Activated naive CD4-positive, alpha-beta T cell treated with anti-CD3 and anti-CD28 coated beads for 36 hours (primary cell): ENCODE measurements at regions of chr3 and their contacts with region 1.

Region 1: GRCh38 chr3:150763122-150763841 is at the start of gene SIAH2:
- DNase-seq: peak; percentile 94
- H3K4me3 Mint-ChIP-seq: peak within 1 kb of the TSS; percentile 99
- H3K27ac Mint-ChIP-seq: peak within 1 kb of the TSS; percentile 100
- H3K4me1 Mint-ChIP-seq: peaks cover 46% of the 10 kb centered on the region
- H3K27me3 Mint-ChIP-seq: no peaks in the 10 kb centered on the region
- total RNA-seq, gene SIAH2: 67.1 to 68.8 TPM

Region 2: DNA sequence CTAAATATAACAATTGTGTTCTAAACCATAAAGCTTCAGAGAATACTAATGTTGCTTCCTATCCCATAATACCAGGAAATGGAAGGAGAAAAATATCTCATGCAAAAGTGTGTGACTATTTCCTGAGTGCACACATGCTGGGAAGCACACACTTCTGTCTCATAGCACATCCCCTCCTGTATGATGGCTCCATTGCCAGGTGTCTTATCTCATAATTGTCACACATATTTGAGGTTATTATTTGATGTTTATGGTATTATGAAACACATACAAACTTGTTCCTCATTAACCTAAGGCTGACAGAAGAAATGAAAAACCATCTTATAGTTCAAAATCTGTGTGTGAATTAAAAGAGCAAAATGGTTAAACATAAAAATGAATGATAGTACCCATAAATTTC is 282.4 kb before region 1 on chr3:
- CTCF ChIA-PET with region 1: no interaction called
- intact Hi-C with region 1: no loop called
- DNase-seq: no peak
- H3K4me3 Mint-ChIP-seq: no peak overlapping the region
- H3K27ac Mint-ChIP-seq: no peak overlapping the region
- H3K4me1 Mint-ChIP-seq: no peaks in the 10 kb centered on the region
- H3K27me3 Mint-ChIP-seq: no peaks in the 10 kb centered on the region

Region 3: GRCh38 chr3:150603153-150603979 is 159.9 kb before region 1 on chr3 and contains the start of gene SELENOT:
- CTCF ChIA-PET with region 1: no interaction called
- intact Hi-C with region 1: loop called (anchors 1 kb)
- DNase-seq: peak; percentile 93
- H3K4me3 Mint-ChIP-seq: peak within 1 kb of the TSS; percentile 96
- H3K27ac Mint-ChIP-seq: peak within 1 kb of the TSS; percentile 97
- H3K4me1 Mint-ChIP-seq: peaks cover 59% of the 10 kb centered on the region
- H3K27me3 Mint-ChIP-seq: no peaks in the 10 kb centered on the region
- total RNA-seq, gene SELENOT: 68.4 to 71.2 TPM

Region 4: DNA sequence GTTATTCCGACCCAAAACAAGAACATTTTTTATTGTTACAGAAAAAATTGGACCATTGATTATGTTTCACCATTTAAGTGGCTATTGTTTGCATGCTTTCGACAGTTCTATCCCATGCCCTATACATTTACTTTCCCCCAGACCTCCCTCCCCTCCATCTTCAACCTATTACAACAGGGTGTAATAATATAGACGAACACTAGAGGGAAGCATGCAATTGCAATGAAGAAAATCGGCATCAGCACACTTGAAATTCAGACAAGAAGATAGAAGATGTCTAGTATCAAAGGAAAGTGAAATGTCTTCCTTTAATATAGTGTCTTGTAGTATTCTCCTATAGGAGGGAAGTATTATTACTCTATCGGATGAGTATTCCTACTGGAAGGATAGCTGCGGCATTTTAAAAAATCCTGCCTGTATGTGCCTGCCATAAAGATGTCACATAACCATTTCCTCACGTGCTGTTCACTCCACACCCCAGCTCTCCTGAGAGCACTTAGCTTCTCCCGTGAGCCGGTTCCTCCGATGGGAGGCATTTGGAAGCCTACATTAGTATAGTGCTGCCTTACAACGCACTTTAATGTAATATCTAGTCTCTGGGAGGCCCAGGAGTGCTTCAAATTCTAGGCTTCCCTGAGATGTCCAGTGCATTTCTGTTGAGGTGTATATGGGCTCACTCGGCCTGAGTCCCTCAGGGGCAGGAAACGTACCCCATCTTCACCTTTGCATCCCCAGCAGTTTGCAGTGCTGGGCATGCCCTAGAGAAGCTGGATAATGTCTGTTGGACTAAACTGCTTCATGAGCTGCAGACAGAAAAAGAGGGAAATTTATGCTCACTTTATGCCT is 41.8 kb before region 1 on chr3:
- CTCF ChIA-PET with region 1: interaction called, 38 read pairs
- intact Hi-C with region 1: loop called (anchors 1 kb)
- DNase-seq: no peak
- H3K4me3 Mint-ChIP-seq: no peak overlapping the region
- H3K27ac Mint-ChIP-seq: no peak overlapping the region
- H3K4me1 Mint-ChIP-seq: peaks cover 28% of the 10 kb centered on the region
- H3K27me3 Mint-ChIP-seq: no peaks in the 10 kb centered on the region

Region 5: DNA sequence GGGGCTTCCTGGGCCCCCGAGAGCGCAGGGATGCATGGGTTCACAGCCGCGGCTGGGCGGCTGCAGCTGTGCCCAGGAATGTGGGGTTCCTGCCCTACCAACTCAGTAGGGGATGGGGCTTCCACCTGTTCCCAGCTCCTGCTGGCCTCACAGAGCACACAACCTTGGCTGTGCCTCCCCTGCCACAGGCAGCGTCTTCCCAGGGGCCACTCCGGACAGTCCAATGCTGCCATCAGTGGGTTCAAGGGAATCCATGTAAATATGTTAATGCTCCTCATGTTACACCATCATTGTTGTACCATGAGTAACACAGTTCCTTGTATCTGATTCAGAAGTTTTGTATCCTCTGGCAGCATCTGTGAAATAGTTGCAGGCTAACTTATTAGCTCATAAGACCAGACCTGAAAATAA is 11.8 kb after region 1 on chr3:
- CTCF ChIA-PET with region 1: interaction called, 10 read pairs
- intact Hi-C with region 1: no loop called
- DNase-seq: no peak
- H3K4me3 Mint-ChIP-seq: no peak overlapping the region
- H3K27ac Mint-ChIP-seq: no peak overlapping the region
- H3K4me1 Mint-ChIP-seq: no peaks in the 10 kb centered on the region
- H3K27me3 Mint-ChIP-seq: no peaks in the 10 kb centered on the region

Region 6: DNA sequence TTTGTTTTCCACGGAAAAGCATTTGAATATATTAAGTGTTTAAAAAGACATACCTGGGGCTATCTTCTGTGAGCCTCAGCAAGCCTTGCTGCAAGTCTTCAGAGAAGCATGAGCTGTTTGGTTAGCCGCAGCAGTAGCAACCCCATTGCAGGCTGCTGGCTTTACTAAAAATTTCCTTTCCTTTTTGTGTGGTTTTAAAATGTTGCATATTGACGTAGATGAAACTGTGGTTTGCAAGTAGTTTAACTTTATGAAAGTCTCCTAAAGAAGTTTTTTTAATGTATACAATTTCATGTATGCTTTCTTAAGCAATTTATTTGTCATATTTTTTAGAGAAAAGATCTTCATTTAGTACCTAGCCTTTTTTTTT is 439.8 kb after region 1 on chr3 and contains the start of gene GPR171:
- CTCF ChIA-PET with region 1: interaction called, 3 read pairs
- intact Hi-C with region 1: loop called (anchors 1 kb)
- DNase-seq: peak; percentile 81
- H3K4me3 Mint-ChIP-seq: peak within 1 kb of the TSS; percentile 94
- H3K27ac Mint-ChIP-seq: peak within 1 kb of the TSS; percentile 100
- H3K4me1 Mint-ChIP-seq: peaks cover 60% of the 10 kb centered on the region
- H3K27me3 Mint-ChIP-seq: no peaks in the 10 kb centered on the region
- total RNA-seq, gene GPR171: 42.8 to 46.9 TPM

Region 7: DNA sequence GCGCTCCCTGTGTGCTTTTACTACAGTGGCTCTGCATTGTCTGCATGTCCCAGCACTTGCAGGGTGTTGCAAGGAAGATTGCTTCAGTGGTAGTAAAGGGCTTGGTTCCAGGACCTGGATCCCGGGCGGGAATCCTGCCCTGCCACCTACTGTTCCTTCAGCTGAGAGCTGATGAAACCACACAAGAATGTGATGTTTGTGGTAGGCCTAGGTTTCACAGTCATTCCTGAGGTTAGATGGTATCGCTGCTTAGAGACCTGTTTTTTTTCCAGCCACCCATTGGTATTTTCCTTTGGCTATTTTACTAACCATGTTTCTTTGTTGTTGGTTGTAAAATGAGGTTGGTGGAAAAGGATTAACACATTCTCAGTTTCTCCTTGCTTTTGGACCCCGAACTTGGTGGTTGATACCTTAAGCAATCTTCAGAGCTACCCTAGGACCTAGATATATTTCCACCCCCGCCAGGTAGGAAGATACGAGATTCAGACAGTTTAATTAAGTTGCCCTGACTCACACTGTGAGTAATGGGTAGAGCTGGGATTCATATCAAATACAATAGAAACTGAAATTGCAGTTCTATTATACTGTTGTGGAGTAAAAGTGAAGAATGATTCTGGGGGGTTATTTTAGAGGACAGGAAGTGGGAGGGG is 541.9 kb after region 1 on chr3:
- CTCF ChIA-PET with region 1: no interaction called
- intact Hi-C with region 1: loop called (anchors 10 kb)
- DNase-seq: peak; percentile 37
- H3K4me3 Mint-ChIP-seq: no peak overlapping the region
- H3K27ac Mint-ChIP-seq: no peak overlapping the region
- H3K4me1 Mint-ChIP-seq: peaks cover 59% of the 10 kb centered on the region
- H3K27me3 Mint-ChIP-seq: peaks cover 18% of the 10 kb centered on the region